GM12878 (cell line): ENCODE measurements at regions of chr14 and their contacts with region 1.

Region 1: GRCh38 chr14:31510222-31510621 is 22.4 kb upstream of the GPR33 start:
- DNase-seq: no peak
- ATAC-seq: peak; percentile 41; the same call in 2 of the 3 replicates
- H3K4me3 ChIP-seq: no peak overlapping the region
- H3K27ac ChIP-seq: no peak overlapping the region
- H3K4me1 ChIP-seq: no peaks in the 10 kb centered on the region
- H3K27me3 ChIP-seq: no peaks in the 10 kb centered on the region
- CTCF ChIP-seq: peak; percentile 26 to 50 (median 42); a peak in 4 of 6 replicates
- EP300 ChIP-seq: no peak
- POLR2A ChIP-seq: no peak
- RAD21 ChIP-seq: peak; percentile 54

Region 2: GRCh38 chr14:32259368-32260013 is 749.3 kb after region 1 on chr14:
- CTCF ChIA-PET with region 1: interaction called, 84 read pairs
- POLR2A ChIA-PET with region 1: no interaction called
- RAD21 ChIA-PET with region 1: interaction called, 23 read pairs
- SMC1A ChIA-PET with region 1: interaction called, 11 read pairs
- in situ Hi-C with region 1: loop called (anchors 5 kb)
- intact Hi-C with region 1: loop called (anchors 2 kb)
- DNase-seq: peak; percentile 66
- ATAC-seq: peak; percentile 90
- H3K4me3 ChIP-seq: no peak overlapping the region
- H3K27ac ChIP-seq: peak overlapping the region; percentile 69
- H3K4me1 ChIP-seq: peaks cover 24% of the 10 kb centered on the region
- H3K27me3 ChIP-seq: no peaks in the 10 kb centered on the region
- CTCF ChIP-seq: no peak
- EP300 ChIP-seq: peak; percentile 41 to 45; a peak in 2 of 4 replicates
- POLR2A ChIP-seq: no peak
- RAD21 ChIP-seq: 0 out of 2 replicates have a peak, but pooled peaks have one; percentile 6

Region 3: GRCh38 chr14:32469388-32470160 is 959.4 kb after region 1 on chr14:
- CTCF ChIA-PET with region 1: interaction called, 3 read pairs
- POLR2A ChIA-PET with region 1: no interaction called
- RAD21 ChIA-PET with region 1: no interaction called
- SMC1A ChIA-PET with region 1: no interaction called
- in situ Hi-C with region 1: loop called (anchors 25 kb)
- intact Hi-C with region 1: loop called (anchors 10 kb)
- DNase-seq: no peak
- ATAC-seq: peak; percentile 51
- H3K4me3 ChIP-seq: no peak overlapping the region
- H3K27ac ChIP-seq: no peak overlapping the region
- H3K4me1 ChIP-seq: no peaks in the 10 kb centered on the region
- H3K27me3 ChIP-seq: no peaks in the 10 kb centered on the region
- CTCF ChIP-seq: peak; percentile 29 to 56 (median 31); a peak in 3 of 6 replicates
- EP300 ChIP-seq: no peak
- POLR2A ChIP-seq: no peak
- RAD21 ChIP-seq: peak; percentile 68